ENCODE measurements at regions of chr2 and their contacts with region 1.

Region 1: GRCh38 chr2:20326163-20326780 is 24.4 kb downstream of the PUM2 start:
- DNase-seq: peak; percentile 51
- CTCF ChIP-seq: peak; percentile 59

Region 2: DNA sequence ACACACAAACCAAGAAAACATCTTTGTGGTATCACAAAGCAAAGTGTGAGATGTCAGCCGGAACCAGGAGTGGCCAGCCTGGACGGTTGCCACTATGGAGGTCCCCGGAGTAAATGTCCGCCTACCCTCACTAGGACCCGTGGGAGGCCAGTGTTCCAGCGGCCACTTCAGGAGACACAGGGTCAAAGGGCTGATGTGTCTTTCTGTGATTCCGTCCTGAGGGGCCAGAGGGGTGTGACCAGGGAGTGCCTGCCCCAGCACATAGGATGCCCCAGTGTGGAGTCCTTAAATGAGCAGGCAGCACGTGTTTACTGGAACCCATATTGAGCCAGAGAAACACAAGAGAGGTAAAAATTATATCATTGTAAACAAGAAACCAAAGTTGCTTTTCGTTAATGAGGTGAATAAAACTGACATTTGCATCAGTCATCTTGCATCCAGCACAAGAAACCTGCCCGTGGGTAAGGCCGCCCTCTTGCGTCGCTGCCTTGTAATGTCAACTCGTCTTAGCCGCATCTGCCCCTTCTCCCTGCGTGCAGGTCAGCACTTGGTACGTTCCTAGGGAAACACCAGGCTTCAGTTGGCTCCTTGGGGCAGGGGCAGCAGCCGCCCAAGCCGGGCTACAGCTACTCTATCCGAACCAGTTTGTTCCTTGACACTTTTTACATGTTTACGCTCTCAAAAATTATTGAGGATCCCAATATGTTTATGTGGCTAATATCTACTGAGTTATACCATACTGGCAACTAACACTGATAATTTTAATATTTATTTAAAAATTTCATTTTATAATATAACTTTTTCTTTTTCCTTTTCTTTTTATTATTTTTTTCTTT is 228.2 kb before region 1 on chr2:
- CTCF ChIA-PET with region 1: no interaction called
- POLR2A ChIA-PET with region 1: no interaction called
- DNase-seq: peak; percentile 86
- CTCF ChIP-seq: peak; percentile 80

Region 3: GRCh38 chr2:20299113-20299512 is 27.2 kb before region 1 on chr2:
- CTCF ChIA-PET with region 1: interaction called, 34 read pairs
- POLR2A ChIA-PET with region 1: no interaction called
- DNase-seq: no peak
- CTCF ChIP-seq: no peak

Region 4: GRCh38 chr2:20313659-20314058 is 12.6 kb before region 1 on chr2:
- CTCF ChIA-PET with region 1: interaction called, 29 read pairs
- POLR2A ChIA-PET with region 1: no interaction called
- DNase-seq: no peak
- CTCF ChIP-seq: no peak

Region 5: GRCh38 chr2:20343128-20343527 is 16.9 kb after region 1 on chr2:
- CTCF ChIA-PET with region 1: interaction called, 33 read pairs
- POLR2A ChIA-PET with region 1: no interaction called
- DNase-seq: no peak
- CTCF ChIP-seq: no peak

Region 6: GRCh38 chr2:20578895-20579825 is 252.9 kb after region 1 on chr2:
- CTCF ChIA-PET with region 1: no interaction called
- POLR2A ChIA-PET with region 1: no interaction called
- DNase-seq: peak; percentile 75
- CTCF ChIP-seq: no peak

Measured in GM10248 (cell line).